Left colon (tissue), 2 donors: ENCODE measurements at regions of chr13 and their contacts with region 1.

Region 1: DNA sequence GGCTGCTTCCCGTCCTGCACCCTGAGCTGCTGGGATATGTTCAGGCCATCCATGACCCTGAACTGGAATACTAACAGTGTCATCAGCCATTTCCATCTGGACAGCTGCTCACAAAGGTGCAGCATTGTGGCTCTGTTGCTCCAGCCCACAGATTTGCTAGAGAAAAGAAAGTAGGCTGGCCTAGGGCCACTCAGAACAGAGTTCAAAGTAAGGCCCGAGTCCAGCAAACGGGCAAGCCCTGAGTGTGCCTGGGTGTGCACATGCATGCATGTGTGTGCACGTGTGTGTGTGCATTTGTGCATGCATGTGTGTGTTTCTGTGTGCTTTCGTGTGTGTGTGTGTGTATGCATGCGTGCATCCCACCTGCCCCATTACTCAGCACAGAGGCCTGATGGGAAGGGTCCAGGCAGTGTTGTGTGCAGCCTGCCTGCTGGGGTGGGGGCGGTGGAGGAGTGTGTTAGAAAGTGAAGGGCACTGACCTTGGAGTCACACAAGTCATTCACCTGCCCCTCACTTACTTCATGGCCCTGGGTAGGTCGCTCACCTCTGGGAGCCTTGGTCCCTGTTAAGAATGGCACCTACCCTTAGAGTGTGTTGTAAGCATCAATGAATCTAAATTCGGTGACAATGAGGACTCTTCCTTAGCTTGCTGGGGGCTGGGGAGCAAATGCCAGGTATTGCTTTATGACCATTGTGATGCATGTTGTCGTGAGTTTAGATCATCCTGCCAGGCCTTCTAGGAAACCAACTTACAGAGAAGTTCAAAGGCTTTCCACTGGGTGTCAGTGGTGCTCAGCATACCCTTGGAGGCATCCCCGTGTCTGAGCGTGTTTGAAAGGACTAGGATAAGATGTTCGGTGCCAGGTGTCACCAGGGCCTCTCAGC is 53.2 kb downstream of the GPR12 start:
- DNase-seq: peak in 1 of 2 donors; percentile 18
- ATAC-seq: peak; percentile 71

Region 2: DNA sequence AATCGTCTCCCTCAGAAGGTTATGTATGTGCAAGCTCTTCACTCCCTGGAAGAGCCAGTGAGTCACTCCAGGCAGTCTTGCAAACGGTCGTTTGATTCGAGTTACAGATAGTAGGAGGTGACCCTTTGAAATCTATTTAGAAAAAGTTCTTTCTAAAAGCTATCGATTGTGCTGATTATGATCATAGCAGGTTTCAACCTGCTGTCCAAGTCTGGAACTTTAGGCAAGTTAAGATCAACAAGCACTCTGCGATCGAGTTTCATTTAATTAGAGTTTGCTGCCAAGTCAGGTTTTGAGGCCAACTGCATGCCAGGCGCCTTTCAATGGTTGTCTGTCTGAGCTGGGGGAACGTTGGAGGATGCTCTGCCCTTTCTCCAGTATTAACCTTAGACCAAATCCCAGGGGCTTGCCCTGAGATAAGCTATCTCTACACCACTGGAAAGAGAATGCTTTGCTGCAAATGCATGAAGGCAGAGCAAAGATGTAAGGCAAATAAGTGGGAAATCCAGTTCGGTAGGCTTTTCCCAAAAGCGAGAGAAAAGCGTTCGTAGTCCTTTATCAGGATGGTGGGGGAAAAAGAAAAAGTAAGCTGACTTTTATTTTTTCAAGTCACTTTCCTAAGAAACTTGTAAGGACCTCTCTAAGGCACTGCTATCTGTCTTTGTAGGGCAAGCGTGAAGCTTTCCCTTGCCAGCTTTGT is 1048.1 kb before region 1 on chr13:
- intact Hi-C with region 1: no loop called
- DNase-seq: no peak
- ATAC-seq: no peak

Region 3: DNA sequence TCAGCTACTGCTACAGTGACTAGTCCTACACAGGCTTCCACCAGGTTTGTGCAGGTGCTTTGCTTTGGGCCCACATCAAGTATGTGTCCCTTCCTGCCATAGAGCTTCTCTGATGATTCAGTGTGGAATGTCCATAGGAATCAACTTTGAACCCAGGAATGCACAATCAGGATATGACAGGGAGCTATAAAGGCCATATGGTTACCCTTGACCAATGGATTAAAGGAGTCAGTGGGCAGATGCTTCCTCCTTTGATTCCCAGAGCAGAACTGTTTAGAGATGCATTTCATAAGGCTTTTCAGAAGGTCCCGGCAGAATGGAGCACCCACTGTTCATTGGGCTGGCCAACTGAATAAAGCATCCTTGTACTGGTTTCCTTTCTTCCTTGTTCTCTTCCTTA is 295.1 kb before region 1 on chr13:
- intact Hi-C with region 1: no loop called
- DNase-seq: no peak
- ATAC-seq: peak; percentile 91

Region 4: DNA sequence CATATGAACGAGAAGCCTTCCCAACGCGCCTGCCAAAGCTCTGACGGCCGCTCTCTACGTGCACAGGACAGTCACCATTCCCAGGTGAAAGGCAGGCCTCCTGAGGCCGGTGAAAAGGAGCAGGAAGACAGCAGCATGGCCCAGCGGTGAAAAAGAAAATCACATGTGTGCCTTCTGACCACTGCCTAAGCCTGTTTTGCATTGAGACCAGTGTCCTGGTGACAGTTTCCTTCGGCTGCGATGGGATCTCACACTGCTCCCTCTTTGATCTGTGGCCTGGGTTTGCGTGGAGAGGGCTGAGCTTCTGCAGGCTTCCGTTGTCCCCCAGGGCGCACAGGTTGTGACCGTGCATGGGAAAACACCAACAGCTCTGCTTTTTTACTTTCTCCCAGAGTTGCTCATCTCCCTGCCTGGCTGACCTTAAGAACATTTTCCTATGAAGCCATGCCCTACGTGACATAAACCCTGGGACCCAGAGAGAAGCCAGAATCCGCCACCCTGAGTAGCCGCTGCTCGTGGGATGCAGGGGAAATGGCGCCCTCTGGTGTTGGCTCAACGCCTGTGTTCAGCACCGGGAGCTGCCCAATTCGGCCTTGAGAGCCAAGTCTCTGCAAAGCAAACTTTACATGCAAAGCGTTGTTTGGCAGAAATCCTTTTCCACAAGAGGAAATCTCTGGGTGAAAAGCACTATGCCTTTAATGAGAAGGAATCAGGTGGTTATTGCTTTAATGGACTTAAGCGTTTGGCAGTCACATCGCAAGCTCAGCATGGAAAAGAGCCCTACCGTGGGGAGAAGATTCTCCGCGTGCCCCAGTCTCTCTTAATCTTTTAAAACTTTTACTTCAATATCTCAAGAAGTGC is 165.4 kb after region 1 on chr13:
- intact Hi-C with region 1: loop called in 1 of 2 experiments (anchors 5 kb)
- DNase-seq: peak in 1 of 2 donors; percentile 64
- ATAC-seq: peak; percentile 50